HepG2 (cell line): ENCODE measurements at regions of chr3 and their contacts with region 1.

Region 1: DNA sequence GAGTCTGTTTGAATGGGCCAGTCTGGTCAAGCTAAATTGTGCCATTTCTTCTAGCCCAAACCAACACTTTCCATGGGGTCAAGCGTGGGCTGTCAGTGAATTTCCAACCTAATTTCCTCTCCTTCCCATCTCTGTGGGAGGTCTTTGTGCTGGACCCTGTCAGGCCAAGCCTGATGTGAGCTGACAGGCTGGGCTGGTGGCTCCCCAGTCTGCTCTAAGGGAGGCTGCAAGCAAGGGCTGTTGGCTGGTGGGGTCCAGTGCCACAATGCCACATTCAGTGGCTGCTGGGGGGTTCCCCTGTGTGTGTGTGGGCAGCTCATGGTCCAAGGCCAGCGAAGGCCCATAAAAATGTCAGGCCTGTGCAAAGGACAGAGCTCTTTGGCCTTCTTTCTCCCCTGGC is 216.1 kb downstream of the OPA1 start:
- DNase-seq: no peak
- ATAC-seq: no peak
- H3K4me3 ChIP-seq: no peak overlapping the region
- H3K27ac ChIP-seq: no peak overlapping the region
- H3K4me1 ChIP-seq: peaks cover 26% of the 10 kb centered on the region
- H3K27me3 ChIP-seq: peaks cover 2 to 73% of the 10 kb centered on the region in 2 experiments; a peak in 3 of 5 replicates
- CTCF ChIP-seq: no peak
- EP300 ChIP-seq: no peak
- POLR2A ChIP-seq: no peak
- RAD21 ChIP-seq: no peak

Region 2: GRCh38 chr3:193768070-193768394 is 41.1 kb before region 1 on chr3:
- CTCF ChIA-PET with region 1: no interaction called
- POLR2A ChIA-PET with region 1: no interaction called
- in situ Hi-C with region 1: no loop called
- intact Hi-C with region 1: loop called (anchors 1 kb)
- DNase-seq: no peak
- ATAC-seq: no peak
- H3K4me3 ChIP-seq: no peak overlapping the region
- H3K27ac ChIP-seq: no peak overlapping the region
- H3K4me1 ChIP-seq: peaks cover 30% of the 10 kb centered on the region
- H3K27me3 ChIP-seq: no peaks in the 10 kb centered on the region
- CTCF ChIP-seq: no peak
- EP300 ChIP-seq: no peak
- POLR2A ChIP-seq: no peak
- RAD21 ChIP-seq: no peak